Mammary epithelial cell (primary cell): ENCODE measurements at regions of chr11 and their contacts with region 1.

Region 1: GRCh38 chr11:65180877-65181568 is 705 bp upstream of the CAPN1 start:
- DNase-seq: peak; percentile 57
- H3K4me3 ChIP-seq: peak overlapping the region; percentile 57 to 95 (median 94)
- H3K27ac ChIP-seq: peak overlapping the region; percentile 56
- H3K4me1 ChIP-seq: peaks cover 26% of the 10 kb centered on the region
- H3K27me3 ChIP-seq: no peaks in the 10 kb centered on the region
- CTCF ChIP-seq: peak; percentile 25 to 65

Region 2: DNA sequence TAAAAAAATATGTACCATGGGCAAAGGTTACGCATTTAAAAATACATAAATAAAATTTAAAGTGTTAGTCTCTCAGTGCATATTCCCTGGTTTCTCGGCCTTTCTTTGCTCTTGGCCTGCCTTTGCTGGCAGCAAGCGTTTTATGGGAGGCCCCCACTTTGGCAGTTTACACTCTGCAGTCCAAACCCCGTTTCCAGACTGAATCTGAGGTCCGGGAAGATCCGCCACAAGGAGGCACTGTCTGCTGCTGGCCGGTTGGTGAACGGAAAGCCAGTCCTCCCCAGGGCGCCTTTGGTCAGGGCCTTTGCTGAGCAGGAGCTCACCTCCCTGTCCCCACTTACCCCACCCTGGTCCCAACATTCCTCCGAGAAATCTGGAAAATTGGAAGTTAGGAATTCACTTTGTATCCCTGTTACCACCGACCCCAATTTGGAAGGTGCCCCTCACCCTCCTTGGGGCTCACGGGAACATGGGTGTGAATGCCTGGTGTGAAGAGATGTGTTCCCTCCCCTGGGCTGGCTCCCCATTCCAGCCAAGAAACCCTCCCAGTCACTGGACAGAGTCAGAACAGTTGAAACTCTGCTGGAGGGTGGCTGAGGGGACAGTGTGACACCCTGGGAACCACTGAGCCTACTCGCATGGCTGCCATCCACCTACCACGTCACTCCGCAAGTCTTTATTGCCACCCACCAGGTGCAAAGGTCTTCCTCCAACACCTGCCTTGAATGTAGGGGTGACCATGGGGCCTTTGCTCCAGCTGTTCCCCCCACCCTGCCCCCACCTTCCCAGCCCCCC is 393.3 kb before region 1 on chr11:
- CTCF ChIA-PET with region 1: no interaction called
- dilution Hi-C with region 1: no loop called
- in situ Hi-C with region 1: no loop called
- intact Hi-C with region 1: loop called (anchors 5 kb)
- DNase-seq: peak; percentile 25
- H3K4me3 ChIP-seq: no peak overlapping the region
- H3K27ac ChIP-seq: no peak overlapping the region
- H3K4me1 ChIP-seq: no peaks in the 10 kb centered on the region
- H3K27me3 ChIP-seq: no peaks in the 10 kb centered on the region
- CTCF ChIP-seq: peak; percentile 81 to 92

Region 3: DNA sequence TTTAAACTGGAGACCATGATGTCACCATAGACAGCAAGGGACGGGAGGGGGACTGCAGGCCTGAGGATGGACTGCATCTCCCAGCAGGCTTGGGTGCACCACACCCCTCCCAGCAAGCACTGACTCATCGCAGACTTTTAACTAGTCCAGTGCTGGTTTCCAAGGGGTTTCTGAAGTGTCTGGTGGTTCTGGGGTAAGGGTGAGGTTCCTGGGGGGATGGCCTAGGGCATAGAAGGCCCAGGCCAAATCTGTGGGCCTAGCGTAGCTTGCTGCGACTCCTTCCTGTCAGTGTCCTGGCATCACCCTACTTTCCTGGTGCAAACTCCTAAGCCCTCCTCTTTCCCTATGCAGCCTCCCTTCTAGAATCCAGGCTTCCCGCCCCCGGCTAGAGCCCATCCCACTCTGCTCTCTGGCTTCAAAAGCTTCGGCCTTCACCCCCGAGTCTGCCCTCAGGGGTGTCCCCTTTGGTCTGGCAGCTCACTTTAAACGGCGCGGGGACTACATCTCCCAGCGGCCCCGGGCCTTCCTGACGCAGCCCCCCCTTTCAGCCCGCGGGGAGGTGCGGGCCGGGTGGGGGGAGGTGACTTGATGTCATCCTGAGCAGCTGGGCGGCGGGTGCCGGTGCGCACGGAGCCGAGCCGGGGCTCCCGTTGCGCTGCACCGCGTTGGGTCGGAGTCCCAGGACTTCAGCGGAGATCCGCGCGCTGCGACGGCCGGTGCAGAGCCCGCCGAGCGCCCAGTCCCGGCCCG is 256.7 kb before region 1 on chr11 and contains the start of gene PPP2R5B:
- CTCF ChIA-PET with region 1: no interaction called
- dilution Hi-C with region 1: no loop called
- in situ Hi-C with region 1: no loop called
- intact Hi-C with region 1: loop called (anchors 2 kb)
- DNase-seq: peak; percentile 88
- H3K4me3 ChIP-seq: peak within 1 kb of the TSS; percentile 77 to 88 (median 78)
- H3K27ac ChIP-seq: peak within 1 kb of the TSS; percentile 70
- H3K4me1 ChIP-seq: peaks cover 10% of the 10 kb centered on the region
- H3K27me3 ChIP-seq: no peaks in the 10 kb centered on the region
- CTCF ChIP-seq: no peak
- total RNA-seq, gene PPP2R5B: 13.8 to 32.7 TPM

Region 4: DNA sequence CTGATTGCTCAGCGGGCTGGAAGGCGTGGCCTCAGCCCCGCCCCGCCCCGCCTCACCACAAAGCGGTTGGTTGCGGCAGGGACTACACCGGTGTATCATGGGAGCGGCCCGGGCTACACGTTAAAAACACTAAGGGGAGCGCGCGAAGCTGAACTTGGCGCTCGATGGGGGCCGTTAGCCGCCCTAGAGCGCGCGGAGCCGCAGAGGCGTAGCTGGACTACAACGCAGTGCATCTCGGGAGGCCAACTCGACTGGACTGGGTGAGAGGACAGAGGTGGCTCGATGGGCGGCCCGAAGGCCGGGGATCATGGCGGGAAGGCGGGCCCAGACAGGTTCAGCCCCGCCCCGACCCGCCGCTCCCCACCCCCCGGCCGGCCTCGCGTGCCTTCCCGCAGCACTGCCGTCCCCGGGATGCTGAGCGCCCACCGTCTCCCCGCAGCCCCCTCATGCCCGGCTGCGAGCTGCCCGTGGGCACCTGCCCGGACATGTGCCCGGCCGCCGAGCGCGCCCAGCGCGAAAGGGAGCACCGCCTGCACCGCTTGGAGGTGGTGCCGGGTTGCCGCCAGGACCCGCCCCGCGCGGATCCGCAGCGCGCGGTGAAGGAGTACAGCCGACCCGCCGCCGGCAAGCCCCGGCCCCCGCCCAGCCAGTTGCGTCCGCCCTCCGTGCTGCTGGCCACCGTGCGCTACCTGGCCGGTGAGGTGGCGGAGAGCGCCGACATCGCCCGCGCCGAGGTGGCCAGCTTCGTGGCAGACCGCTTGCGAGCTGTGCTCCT is 140.0 kb before region 1 on chr11 and contains the start of gene SAC3D1:
- CTCF ChIA-PET with region 1: no interaction called
- dilution Hi-C with region 1: no loop called
- in situ Hi-C with region 1: no loop called
- intact Hi-C with region 1: loop called (anchors 1 kb)
- DNase-seq: peak; percentile 97
- H3K4me3 ChIP-seq: peak within 1 kb of the TSS; percentile 43 to 89 (median 80)
- H3K27ac ChIP-seq: peak within 1 kb of the TSS; percentile 9
- H3K4me1 ChIP-seq: peaks cover 16% of the 10 kb centered on the region
- H3K27me3 ChIP-seq: no peaks in the 10 kb centered on the region
- CTCF ChIP-seq: no peak
- total RNA-seq, gene SAC3D1: 13.2 to 25.1 TPM

Region 5: GRCh38 chr11:65117216-65118096 is 63.6 kb before region 1 on chr11 and contains the start of gene ZNHIT2:
- CTCF ChIA-PET with region 1: no interaction called
- dilution Hi-C with region 1: no loop called
- in situ Hi-C with region 1: no loop called
- intact Hi-C with region 1: loop called (anchors 1 kb)
- DNase-seq: peak; percentile 98
- H3K4me3 ChIP-seq: peak within 1 kb of the TSS; percentile 74 to 82 (median 81)
- H3K27ac ChIP-seq: peak within 1 kb of the TSS; percentile 74
- H3K4me1 ChIP-seq: peaks cover 33% of the 10 kb centered on the region
- H3K27me3 ChIP-seq: no peaks in the 10 kb centered on the region
- CTCF ChIP-seq: peak; percentile 84 to 95
- total RNA-seq, gene ZNHIT2: 13.6 to 15.2 TPM

Region 6: GRCh38 chr11:65150509-65151271 is 30.3 kb before region 1 on chr11:
- CTCF ChIA-PET with region 1: no interaction called
- dilution Hi-C with region 1: no loop called
- in situ Hi-C with region 1: no loop called
- intact Hi-C with region 1: loop called (anchors 1 kb)
- DNase-seq: peak; percentile 93
- H3K4me3 ChIP-seq: peak overlapping the region in 1 of 3 experiments; percentile 11
- H3K27ac ChIP-seq: peak overlapping the region; percentile 70
- H3K4me1 ChIP-seq: peaks cover 18% of the 10 kb centered on the region
- H3K27me3 ChIP-seq: no peaks in the 10 kb centered on the region
- CTCF ChIP-seq: peak in 1 of 2 donors; percentile 15

Region 7: DNA sequence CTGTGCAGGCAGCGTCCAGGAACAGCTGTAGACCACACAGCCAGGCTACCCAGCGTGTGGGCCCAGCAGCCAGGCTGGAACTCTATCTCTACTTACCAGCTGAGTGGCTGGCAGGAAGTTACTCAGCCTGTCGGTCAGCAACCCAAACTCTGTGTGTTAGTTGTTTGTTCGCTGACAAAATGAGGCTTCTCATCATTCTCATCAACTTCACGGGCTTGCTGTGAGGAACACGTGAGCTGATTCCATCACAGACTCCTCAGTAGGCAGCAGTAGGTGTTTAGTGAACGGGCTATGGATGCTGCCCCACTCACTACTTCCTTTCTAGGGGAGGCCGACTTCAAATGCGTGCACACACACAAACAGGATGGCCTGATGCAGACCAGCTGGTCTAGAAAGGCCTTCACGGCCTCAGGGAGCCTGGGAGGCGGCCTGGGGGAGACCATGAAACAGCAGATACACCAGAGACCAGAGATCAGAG is 11.8 kb before region 1 on chr11:
- CTCF ChIA-PET with region 1: no interaction called
- dilution Hi-C with region 1: no loop called
- in situ Hi-C with region 1: no loop called
- intact Hi-C with region 1: no loop called
- DNase-seq: no peak
- H3K4me3 ChIP-seq: no peak overlapping the region
- H3K27ac ChIP-seq: no peak overlapping the region
- H3K4me1 ChIP-seq: no peaks in the 10 kb centered on the region
- H3K27me3 ChIP-seq: no peaks in the 10 kb centered on the region
- CTCF ChIP-seq: no peak

Region 8: GRCh38 chr11:65251476-65251875 is 70.5 kb after region 1 on chr11:
- CTCF ChIA-PET with region 1: no interaction called
- dilution Hi-C with region 1: no loop called
- in situ Hi-C with region 1: no loop called
- intact Hi-C with region 1: loop called (anchors 10 kb)
- DNase-seq: no peak
- H3K4me3 ChIP-seq: no peak overlapping the region
- H3K27ac ChIP-seq: no peak overlapping the region
- H3K4me1 ChIP-seq: no peaks in the 10 kb centered on the region
- H3K27me3 ChIP-seq: no peaks in the 10 kb centered on the region
- CTCF ChIP-seq: no peak